Activated B cell treated with CpG ODN at 0.5 μM for 24 hours (primary cell): ENCODE measurements at regions of chr6 and their contacts with region 1.

Region 1: DNA sequence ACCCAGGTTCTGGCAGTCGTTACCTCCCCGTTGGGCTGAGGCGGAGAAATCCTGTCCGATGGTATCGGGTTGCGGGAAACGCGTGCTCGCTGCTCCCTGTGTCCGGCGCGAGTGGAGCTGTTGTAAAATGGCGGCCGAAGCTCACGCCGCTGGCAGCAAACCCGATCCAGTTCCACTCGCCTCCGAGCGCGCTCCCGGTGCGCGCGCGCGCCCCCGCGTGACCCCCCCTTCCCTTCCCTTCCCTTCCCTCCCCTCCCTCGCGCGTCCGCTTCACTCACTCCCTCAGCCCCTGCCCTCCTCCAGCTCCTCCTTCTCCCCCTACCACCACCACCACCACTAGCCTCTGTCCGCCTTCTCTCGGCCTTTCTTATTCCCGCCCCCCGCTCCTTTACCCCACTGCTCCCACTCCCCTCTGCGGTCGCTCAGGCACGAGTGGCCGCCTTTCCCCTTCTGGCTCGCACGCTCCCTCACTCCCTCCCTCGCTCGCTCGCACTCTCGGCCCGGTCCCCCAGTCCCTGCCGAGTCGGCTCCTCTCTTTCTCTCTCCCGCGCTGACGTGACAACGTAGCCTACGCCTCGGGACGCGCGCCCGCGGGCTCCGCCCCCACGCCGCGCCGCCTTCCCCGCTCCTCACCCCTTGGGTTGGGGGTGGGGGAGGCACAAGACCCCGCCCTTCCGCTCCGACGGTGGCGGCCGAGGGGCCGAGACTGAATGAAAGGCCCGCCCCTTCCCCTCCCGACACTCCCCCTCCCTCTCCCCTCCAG is at the start of gene SYNCRIP:
- DNase-seq: peak; percentile 98
- ATAC-seq: peak; percentile 81
- H3K4me3 Mint-ChIP-seq: peak within 1 kb of the TSS; percentile 98
- H3K27ac Mint-ChIP-seq: peak within 1 kb of the TSS; percentile 99
- H3K4me1 Mint-ChIP-seq: peaks cover 46% of the 10 kb centered on the region
- H3K27me3 Mint-ChIP-seq: no peaks in the 10 kb centered on the region
- CTCF ChIP-seq: no peak
- total RNA-seq, gene SYNCRIP: 119 and 122 TPM in 2 replicates

Region 2: GRCh38 chr6:85015396-85015990 is 627.5 kb before region 1 on chr6:
- CTCF ChIA-PET with region 1: no interaction called
- POLR2A ChIA-PET with region 1: no interaction called
- intact Hi-C with region 1: no loop called
- DNase-seq: no peak
- ATAC-seq: no peak
- H3K4me3 Mint-ChIP-seq: no peak overlapping the region
- H3K27ac Mint-ChIP-seq: no peak overlapping the region
- H3K4me1 Mint-ChIP-seq: no peaks in the 10 kb centered on the region
- H3K27me3 Mint-ChIP-seq: no peaks in the 10 kb centered on the region
- CTCF ChIP-seq: no peak

Region 3: GRCh38 chr6:85419046-85419759 is 223.8 kb before region 1 on chr6:
- CTCF ChIA-PET with region 1: no interaction called
- POLR2A ChIA-PET with region 1: no interaction called
- intact Hi-C with region 1: no loop called
- DNase-seq: no peak
- ATAC-seq: peak; percentile 28
- H3K4me3 Mint-ChIP-seq: peak overlapping the region; percentile 67
- H3K27ac Mint-ChIP-seq: peak overlapping the region; percentile 84
- H3K4me1 Mint-ChIP-seq: peaks cover 37% of the 10 kb centered on the region
- H3K27me3 Mint-ChIP-seq: peaks cover 2% of the 10 kb centered on the region
- CTCF ChIP-seq: no peak

Region 4: DNA sequence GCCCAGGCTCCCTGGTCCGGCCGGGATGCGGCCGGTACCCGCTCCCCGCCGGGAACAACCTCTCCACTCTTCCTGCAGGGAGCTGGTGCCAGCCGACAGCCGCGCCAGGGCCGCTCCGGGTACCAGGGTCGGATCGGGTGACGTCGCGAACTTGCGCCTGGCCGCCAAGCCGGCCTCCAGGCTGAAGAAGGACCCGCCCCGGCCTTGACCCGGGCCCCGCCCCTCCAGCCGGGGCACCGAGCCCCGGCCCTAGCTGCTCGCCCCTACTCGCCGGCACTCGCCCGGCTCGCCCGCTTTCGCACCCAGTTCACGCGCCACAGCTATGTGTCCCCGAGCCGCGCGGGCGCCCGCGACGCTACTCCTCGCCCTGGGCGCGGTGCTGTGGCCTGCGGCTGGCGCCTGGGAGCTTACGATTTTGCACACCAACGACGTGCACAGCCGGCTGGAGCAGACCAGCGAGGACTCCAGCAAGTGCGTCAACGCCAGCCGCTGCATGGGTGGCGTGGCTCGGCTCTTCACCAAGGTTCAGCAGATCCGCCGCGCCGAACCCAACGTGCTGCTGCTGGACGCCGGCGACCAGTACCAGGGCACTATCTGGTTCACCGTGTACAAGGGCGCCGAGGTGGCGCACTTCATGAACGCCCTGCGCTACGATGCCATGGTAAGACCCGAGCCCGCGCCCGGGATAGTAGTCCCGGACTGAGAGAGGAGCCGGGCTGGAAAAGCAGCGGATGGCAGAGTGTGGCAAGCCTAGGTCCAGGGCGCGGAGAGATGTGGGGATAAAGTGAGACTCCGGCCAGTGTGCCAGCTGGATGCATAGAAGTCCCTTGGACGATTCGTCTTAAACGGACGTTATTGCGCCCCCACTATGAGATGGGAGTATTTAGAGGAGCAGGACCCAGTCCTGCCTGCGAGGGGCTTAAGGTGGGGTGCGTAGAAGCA is 192.9 kb before region 1 on chr6 and contains the start of gene NT5E:
- CTCF ChIA-PET with region 1: no interaction called
- POLR2A ChIA-PET with region 1: interaction called, 27 read pairs
- intact Hi-C with region 1: loop called (anchors 1 kb)
- DNase-seq: peak; percentile 67
- ATAC-seq: peak; percentile 77
- H3K4me3 Mint-ChIP-seq: peak within 1 kb of the TSS; percentile 97
- H3K27ac Mint-ChIP-seq: peak within 1 kb of the TSS; percentile 94
- H3K4me1 Mint-ChIP-seq: peaks cover 68% of the 10 kb centered on the region
- H3K27me3 Mint-ChIP-seq: peaks cover 10% of the 10 kb centered on the region
- CTCF ChIP-seq: no peak
- total RNA-seq, gene NT5E: 5.8 and 6.6 TPM in 2 replicates

Region 5: GRCh38 chr6:85600713-85601313 is 42.1 kb before region 1 on chr6:
- CTCF ChIA-PET with region 1: no interaction called
- POLR2A ChIA-PET with region 1: interaction called, 127 read pairs
- intact Hi-C with region 1: no loop called
- DNase-seq: no peak
- ATAC-seq: no peak
- H3K4me3 Mint-ChIP-seq: no peak overlapping the region
- H3K27ac Mint-ChIP-seq: peak overlapping the region; percentile 9
- H3K4me1 Mint-ChIP-seq: no peaks in the 10 kb centered on the region
- H3K27me3 Mint-ChIP-seq: no peaks in the 10 kb centered on the region
- CTCF ChIP-seq: no peak

Region 6: GRCh38 chr6:85620308-85620707 is 22.6 kb before region 1 on chr6:
- CTCF ChIA-PET with region 1: no interaction called
- POLR2A ChIA-PET with region 1: interaction called, 11 read pairs
- intact Hi-C with region 1: no loop called
- DNase-seq: no peak
- ATAC-seq: no peak
- H3K4me3 Mint-ChIP-seq: no peak overlapping the region
- H3K27ac Mint-ChIP-seq: no peak overlapping the region
- H3K4me1 Mint-ChIP-seq: peaks cover 8% of the 10 kb centered on the region
- H3K27me3 Mint-ChIP-seq: no peaks in the 10 kb centered on the region
- CTCF ChIP-seq: no peak

Region 7: DNA sequence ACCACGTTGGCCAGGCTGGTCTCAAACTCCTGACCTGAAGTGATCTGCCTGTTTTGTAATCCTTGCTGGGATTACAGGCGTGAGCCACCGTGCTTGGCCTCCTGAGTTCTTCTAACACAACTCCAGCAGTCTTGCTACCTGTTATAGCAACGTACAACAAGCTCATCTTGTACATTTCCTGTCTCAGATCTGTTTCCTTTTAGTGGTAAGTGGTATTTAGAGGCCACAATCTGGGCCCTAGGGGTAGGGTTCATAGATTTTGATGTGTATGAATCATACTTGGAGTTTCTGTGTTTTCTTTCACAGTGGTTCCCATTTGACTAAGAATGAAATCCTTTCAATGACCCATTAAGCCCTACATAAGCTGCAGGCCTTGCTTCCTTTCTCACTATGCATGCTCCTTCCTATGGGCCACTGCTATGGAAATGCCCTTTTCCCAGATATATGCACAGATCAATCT is 26.8 kb after region 1 on chr6:
- CTCF ChIA-PET with region 1: interaction called, 8 read pairs
- POLR2A ChIA-PET with region 1: interaction called, 845 read pairs
- intact Hi-C with region 1: loop called (anchors 1 kb)
- DNase-seq: no peak
- ATAC-seq: peak; percentile 97
- H3K4me3 Mint-ChIP-seq: peak overlapping the region; percentile 75
- H3K27ac Mint-ChIP-seq: peak overlapping the region; percentile 95
- H3K4me1 Mint-ChIP-seq: peaks cover 50% of the 10 kb centered on the region
- H3K27me3 Mint-ChIP-seq: no peaks in the 10 kb centered on the region
- CTCF ChIP-seq: no peak

Region 8: GRCh38 chr6:85923013-85923430 is 280.1 kb after region 1 on chr6:
- CTCF ChIA-PET with region 1: no interaction called
- POLR2A ChIA-PET with region 1: no interaction called
- intact Hi-C with region 1: loop called (anchors 10 kb)
- DNase-seq: no peak
- ATAC-seq: no peak
- H3K4me3 Mint-ChIP-seq: no peak overlapping the region
- H3K27ac Mint-ChIP-seq: no peak overlapping the region
- H3K4me1 Mint-ChIP-seq: no peaks in the 10 kb centered on the region
- H3K27me3 Mint-ChIP-seq: no peaks in the 10 kb centered on the region
- CTCF ChIP-seq: no peak

Region 9: DNA sequence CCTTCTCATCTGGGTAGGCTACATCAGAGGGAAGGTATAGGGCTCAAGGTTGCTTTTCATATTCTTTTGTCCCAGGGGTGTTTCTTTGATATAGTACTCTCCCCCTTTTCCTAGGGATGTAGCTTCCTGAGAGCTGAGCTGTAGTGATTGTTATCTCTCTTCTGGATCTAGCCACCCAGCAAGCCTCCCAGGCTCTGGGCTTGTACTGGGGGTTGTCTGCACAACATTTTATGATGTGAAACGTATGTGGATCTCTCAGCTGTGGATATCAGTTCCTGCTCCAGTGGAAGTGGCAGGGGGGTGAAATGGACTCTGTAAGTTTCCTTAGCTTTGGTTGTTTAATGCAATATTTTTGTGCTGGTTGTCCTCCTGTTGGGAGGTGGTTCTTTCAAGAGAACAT is 437.0 kb after region 1 on chr6:
- CTCF ChIA-PET with region 1: no interaction called
- POLR2A ChIA-PET with region 1: no interaction called
- intact Hi-C with region 1: no loop called
- DNase-seq: no peak
- ATAC-seq: no peak
- H3K4me3 Mint-ChIP-seq: no peak overlapping the region
- H3K27ac Mint-ChIP-seq: no peak overlapping the region
- H3K4me1 Mint-ChIP-seq: no peaks in the 10 kb centered on the region
- H3K27me3 Mint-ChIP-seq: no peaks in the 10 kb centered on the region
- CTCF ChIP-seq: no peak